PC-9 (cell line): ENCODE measurements at regions of chr2 and their contacts with region 1.

Region 1: DNA sequence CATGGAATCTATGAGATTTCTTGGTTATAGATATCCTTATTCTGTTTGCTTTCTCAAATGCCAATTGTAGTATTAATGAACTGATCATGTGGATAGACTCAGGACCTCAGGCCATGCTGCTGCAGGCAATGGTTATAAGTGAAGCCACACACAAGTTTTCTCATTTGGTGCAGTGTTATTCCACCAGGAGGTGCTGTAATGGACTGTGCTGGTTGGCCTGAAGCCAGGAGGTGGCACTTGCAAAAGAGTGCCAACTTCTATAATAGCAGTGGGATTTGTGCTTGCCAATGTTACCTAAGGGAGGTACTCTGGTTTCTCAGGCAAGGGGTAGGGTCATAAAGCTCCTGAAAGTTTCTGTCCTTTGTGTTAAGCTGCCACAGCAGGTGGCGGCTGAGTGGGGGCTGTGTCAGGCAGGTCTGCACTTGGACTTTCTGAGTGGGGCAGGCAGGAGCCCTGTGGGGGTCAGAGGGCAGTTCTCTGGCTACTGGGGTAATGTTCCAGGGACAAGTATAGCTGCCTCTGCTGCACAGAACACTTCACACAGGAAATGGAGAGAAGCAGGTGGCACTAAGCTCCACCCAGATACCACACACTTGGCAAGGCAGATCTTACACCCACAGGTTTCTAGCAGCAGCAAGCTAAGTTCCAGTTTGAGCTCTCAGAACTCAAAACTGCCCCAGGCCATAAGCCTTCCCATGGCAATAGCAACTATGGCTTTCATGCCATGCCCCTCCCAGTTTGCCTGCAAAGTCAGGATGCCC is 352.6 kb upstream of the CWC22 start:
- DNase-seq: peak; percentile 53 to 79
- H3K4me3 ChIP-seq: no peak overlapping the region
- H3K27ac ChIP-seq: no peak overlapping the region
- H3K4me1 ChIP-seq: no peaks in the 10 kb centered on the region
- H3K27me3 ChIP-seq: no peaks in the 10 kb centered on the region
- CTCF ChIP-seq: peak; percentile 35; the same call in 1 of the 2 replicates

Region 2: DNA sequence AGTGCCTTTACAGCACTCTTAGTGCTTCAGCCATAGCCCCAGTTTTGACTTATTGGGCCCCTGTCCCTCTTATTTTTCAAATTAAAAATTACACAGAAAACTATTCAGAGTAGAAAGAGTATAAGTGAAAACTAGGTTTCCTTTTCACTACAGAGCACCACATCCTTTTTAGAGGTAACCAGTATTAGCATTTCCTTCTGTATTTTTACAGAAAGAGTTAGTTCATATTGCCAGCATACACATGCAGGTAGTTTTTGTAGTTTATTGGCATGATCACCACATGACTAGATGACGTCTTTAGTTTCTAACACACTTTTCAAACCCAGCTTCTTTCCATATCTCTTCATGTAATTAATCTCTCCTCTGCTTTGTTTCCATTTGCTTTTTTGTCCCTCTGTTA is 687.1 kb after region 1 on chr2:
- CTCF ChIA-PET with region 1: no interaction called
- POLR2A ChIA-PET with region 1: no interaction called
- intact Hi-C with region 1: loop called (anchors 10 kb)
- DNase-seq: no peak
- H3K4me3 ChIP-seq: no peak overlapping the region
- H3K27ac ChIP-seq: no peak overlapping the region
- H3K4me1 ChIP-seq: no peaks in the 10 kb centered on the region
- H3K27me3 ChIP-seq: no peaks in the 10 kb centered on the region
- CTCF ChIP-seq: no peak